AG04449 (cell line): ENCODE measurements at regions of chr3 and their contacts with region 1.

Region 1: DNA sequence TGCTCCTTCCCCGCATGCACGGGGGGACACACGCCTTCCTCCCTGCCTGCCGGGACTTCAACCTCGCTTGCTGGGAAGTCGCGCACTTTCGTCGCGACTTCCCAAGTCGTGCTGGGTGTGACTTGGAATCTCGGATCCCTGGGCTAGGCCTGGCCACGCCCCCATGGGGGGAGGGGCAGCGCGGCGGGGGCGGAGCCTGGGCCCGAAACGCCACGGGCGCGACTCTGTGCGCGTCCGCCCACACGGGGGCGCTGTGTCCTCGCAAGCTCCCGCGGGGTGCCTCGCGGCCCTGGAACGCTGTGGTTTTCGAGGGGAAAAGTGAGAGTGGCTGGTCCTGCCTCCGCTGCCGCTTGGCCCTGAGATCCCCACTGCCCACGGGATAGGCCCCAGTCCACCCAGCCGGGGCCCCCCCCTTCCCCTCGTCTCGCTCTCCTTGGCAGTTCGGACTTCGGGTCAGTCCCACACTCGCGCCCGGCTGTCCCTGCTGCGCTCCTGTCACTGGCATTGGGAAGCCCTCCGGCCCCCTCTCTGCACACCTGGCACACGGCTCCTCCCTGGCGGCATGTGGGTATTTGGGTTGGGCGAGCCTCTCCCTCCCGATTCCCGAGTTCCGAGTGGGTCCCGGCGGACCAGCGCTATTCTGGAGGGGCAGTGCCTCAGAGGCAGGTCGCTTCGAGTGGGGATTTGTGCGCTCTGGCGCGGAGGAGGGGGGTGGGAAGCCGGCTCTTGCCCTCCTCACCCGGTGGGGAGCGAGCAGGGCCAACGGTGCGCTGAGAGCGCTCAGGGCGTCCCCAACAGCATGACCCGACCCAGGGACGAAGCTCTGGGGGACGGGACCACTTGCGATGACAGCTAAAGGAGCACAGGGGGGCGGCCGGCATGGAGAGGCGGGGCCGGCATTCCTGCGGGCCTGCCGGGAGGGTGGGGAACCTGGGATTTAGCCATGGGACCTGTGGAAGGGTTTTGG is 23.6 kb downstream of the SEC61A1 start:
- DNase-seq: no peak
- H3K4me3 ChIP-seq: peak overlapping the region; percentile 32
- CTCF ChIP-seq: peak; percentile 96

Region 2: DNA sequence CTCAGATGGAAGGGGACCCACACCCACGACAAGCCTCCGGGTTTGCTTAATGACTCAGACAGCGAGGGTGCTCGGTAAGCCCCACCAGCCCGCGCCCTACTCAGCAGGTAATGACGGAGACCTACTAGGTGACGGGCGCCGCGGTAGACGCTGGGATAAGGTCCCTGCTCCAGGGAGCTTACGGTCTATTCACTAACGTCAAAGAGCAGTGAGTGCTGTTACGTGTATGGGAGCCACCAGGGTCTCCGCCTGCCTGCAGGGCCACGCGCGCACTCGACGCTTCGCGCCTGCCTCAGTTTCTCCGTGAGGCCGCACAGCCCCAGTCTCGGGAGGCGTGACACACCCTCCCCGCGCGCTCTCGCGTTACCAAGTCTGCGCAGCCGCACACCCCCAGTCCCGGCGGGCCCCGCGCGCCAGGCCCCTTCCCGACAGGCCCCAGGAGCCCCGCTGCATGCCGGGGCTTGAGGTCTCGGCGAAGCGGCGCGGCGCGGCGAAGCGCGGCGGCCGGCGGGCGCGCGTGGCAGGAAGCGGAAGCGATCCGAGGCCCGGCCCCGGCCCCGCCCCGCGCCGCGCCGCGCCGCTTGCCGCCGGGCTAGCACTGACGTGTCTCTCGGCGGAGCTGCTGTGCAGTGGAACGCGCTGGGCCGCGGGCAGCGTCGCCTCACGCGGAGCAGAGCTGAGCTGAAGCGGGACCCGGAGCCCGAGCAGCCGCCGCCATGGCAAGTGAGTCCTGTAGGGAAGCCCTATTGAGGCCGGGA is 23.8 kb before region 1 on chr3 and contains the start of gene SEC61A1:
- CTCF ChIA-PET with region 1: interaction called, 13 read pairs
- POLR2A ChIA-PET with region 1: no interaction called
- DNase-seq: peak; percentile 41
- H3K4me3 ChIP-seq: peak within 1 kb of the TSS; percentile 88
- CTCF ChIP-seq: no peak

Region 3: DNA sequence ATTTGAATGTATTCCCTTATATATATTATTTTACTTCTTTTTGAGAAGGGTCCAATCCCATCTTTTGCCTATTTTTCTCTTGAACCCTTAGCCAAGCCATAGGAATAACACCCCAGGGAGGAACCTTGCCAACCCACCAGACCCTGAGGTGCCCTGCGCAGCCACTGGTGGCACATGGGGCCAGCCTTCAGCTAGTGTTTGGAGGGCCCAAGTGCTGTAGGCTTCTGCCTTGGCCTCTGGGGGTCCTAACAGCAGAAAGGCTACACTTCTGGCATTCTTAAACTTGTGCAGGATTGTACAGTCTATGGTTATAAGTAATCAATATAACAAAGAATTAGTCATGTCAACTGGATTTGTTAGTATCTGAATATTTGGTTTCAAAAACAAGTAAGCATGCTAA is 13.3 kb after region 1 on chr3:
- CTCF ChIA-PET with region 1: interaction called, 27 read pairs
- POLR2A ChIA-PET with region 1: interaction called, 3 read pairs
- DNase-seq: no peak
- H3K4me3 ChIP-seq: no peak overlapping the region
- CTCF ChIP-seq: no peak

Region 4: GRCh38 chr3:128095222-128095703 is 19.5 kb after region 1 on chr3:
- CTCF ChIA-PET with region 1: interaction called, 27 read pairs
- POLR2A ChIA-PET with region 1: no interaction called
- DNase-seq: peak; percentile 82
- H3K4me3 ChIP-seq: no peak overlapping the region
- CTCF ChIP-seq: peak; percentile 90